ENCODE measurements at regions of chr17 and their contacts with region 1.

Region 1: GRCh38 chr17:63904316-63904715 is 6.7 kb downstream of the CSHL1 start:
- DNase-seq: no peak
- ATAC-seq: no peak
- H3K4me3 ChIP-seq: no peak overlapping the region
- H3K27ac ChIP-seq: no peak overlapping the region
- H3K4me1 ChIP-seq: peaks cover 0 to 1% of the 10 kb centered on the region in 2 experiments; a peak in 1 of 4 replicates
- H3K27me3 ChIP-seq: 0 out of 2 replicates have a peak, but pooled peaks cover 6% of the 10 kb centered on the region
- CTCF ChIP-seq: no peak
- POLR2A ChIP-seq: no peak
- RAD21 ChIP-seq: no peak

Region 2: GRCh38 chr17:63665527-63666214 is 238.6 kb before region 1 on chr17:
- CTCF ChIA-PET with region 1: no interaction called
- POLR2A ChIA-PET with region 1: no interaction called
- RAD21 ChIA-PET with region 1: no interaction called
- intact Hi-C with region 1: no loop called
- DNase-seq: no peak
- ATAC-seq: no peak
- H3K4me3 ChIP-seq: no peak overlapping the region
- H3K27ac ChIP-seq: no peak overlapping the region
- H3K4me1 ChIP-seq: no peaks in the 10 kb centered on the region
- H3K27me3 ChIP-seq: no peaks in the 10 kb centered on the region
- CTCF ChIP-seq: no peak
- POLR2A ChIP-seq: no peak
- RAD21 ChIP-seq: no peak

Region 3: GRCh38 chr17:63881876-63882601 is 22.3 kb before region 1 on chr17 and contains the start of gene GH2:
- CTCF ChIA-PET with region 1: interaction called, 19 read pairs
- POLR2A ChIA-PET with region 1: no interaction called
- RAD21 ChIA-PET with region 1: no interaction called
- intact Hi-C with region 1: no loop called
- DNase-seq: peak; percentile 56
- ATAC-seq: peak; percentile 97
- H3K4me3 ChIP-seq: no peak within 1 kb of the TSS
- H3K27ac ChIP-seq: no peak within 1 kb of the TSS
- H3K4me1 ChIP-seq: peaks cover 0 to 7% of the 10 kb centered on the region in 2 experiments; a peak in 3 of 4 replicates
- H3K27me3 ChIP-seq: no peaks in the 10 kb centered on the region
- CTCF ChIP-seq: peak; percentile 44 to 89 (median 76); a peak in 5 of 6 replicates
- POLR2A ChIP-seq: no peak
- RAD21 ChIP-seq: no peak
- total RNA-seq, gene GH2: not detected

Region 4: GRCh38 chr17:64399071-64399766 is 494.9 kb after region 1 on chr17:
- CTCF ChIA-PET with region 1: no interaction called
- POLR2A ChIA-PET with region 1: no interaction called
- RAD21 ChIA-PET with region 1: no interaction called
- intact Hi-C with region 1: no loop called
- DNase-seq: no peak
- ATAC-seq: peak; percentile 83
- H3K4me3 ChIP-seq: no peak overlapping the region
- H3K27ac ChIP-seq: no peak overlapping the region
- H3K4me1 ChIP-seq: peaks cover 11 to 21% of the 10 kb centered on the region in 2 experiments
- H3K27me3 ChIP-seq: no peaks in the 10 kb centered on the region
- CTCF ChIP-seq: no peak
- POLR2A ChIP-seq: no peak
- RAD21 ChIP-seq: no peak

Measured in HCT116 (cell line).